ENCODE measurements at regions of chr15 and their contacts with region 1.

Region 1: GRCh38 chr15:68875377-68876116 is 54.8 kb upstream of the SPESP1 start:
- DNase-seq: peak; percentile 91 to 94
- H3K4me3 ChIP-seq: peak overlapping the region; percentile 26 to 41
- H3K27ac ChIP-seq: peak overlapping the region in 1 of 2 donors; percentile 22
- H3K4me1 ChIP-seq: no peaks in the 10 kb centered on the region
- H3K27me3 ChIP-seq: no peaks in the 10 kb centered on the region
- CTCF ChIP-seq: peak; percentile 87 to 94 (median 92)
- POLR2A ChIP-seq: no peak

Region 2: DNA sequence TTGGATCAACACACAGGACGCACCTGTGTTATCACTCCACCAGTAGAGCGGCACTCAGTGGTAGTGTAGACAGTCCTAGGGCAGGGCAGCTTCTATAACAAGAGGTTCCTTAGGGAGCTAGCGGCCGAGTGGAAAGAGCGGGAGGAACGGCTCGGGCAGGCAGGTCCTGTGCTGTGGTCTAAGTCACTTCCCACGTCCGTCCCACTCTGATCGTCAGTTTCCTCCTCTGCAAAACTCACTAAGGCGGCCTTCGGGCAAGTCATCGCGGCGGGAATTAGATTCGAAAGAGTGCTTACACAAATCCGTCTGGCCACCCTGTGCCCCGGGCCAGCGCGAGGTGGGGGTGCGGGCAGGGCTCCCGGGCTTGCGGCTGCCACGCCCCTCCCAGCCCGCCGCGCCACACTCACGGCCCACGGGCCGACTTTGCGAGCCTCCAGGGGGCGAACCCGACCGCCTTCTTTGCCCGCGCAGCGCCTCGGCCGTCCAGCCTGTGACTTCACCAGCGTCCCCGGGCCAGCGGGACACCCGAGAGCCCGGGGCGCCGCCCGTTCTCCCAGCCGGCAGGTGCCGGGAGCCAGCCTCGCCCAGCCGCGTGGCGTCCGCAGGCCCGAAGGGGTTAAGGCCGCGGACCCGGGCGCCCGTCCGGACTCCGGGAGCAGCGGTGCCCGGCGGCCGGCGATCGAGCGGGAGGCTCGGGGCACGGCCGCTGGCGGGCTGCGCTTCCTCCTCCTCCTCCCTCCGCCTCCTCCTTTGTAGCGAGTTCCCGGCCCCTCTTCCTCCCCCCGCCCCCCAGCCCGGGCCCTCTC is 297.2 kb before region 1 on chr15:
- intact Hi-C with region 1: loop called (anchors 10 kb)
- DNase-seq: peak; percentile 80 to 86
- H3K4me3 ChIP-seq: peak overlapping the region; percentile 32 to 60
- H3K27ac ChIP-seq: peak overlapping the region; percentile 75 to 90
- H3K4me1 ChIP-seq: no peaks in the 10 kb centered on the region
- H3K27me3 ChIP-seq: no peaks in the 10 kb centered on the region
- CTCF ChIP-seq: peak; percentile 59 to 89 (median 74)
- POLR2A ChIP-seq: peak in 1 of 2 donors; percentile 42

Region 3: DNA sequence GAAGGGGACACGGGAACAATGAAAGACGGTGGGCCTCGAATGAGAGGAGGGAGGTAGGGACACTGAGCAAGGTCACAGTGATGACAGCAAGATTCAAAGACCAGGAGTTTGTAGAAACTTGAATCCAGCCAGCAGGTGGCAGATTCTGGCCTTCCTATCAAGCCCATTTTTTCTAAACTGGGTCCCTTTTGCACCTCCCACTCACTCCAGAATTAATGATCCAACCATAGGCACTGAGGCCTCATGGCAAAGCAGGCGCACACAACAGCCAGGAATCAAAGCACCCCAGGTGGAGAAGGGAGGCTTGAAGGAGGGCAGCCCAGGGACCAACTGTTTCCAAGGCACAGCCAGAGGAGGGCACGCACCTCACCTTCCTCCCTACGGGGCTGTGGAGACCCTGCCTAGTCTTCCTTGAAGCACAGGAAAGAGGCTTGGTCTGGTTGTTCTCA is 145.1 kb before region 1 on chr15:
- intact Hi-C with region 1: loop called (anchors 10 kb)
- DNase-seq: peak; percentile 34 to 60
- H3K4me3 ChIP-seq: no peak overlapping the region
- H3K27ac ChIP-seq: peak overlapping the region; percentile 59 to 77
- H3K4me1 ChIP-seq: peaks cover 0 to 15% of the 10 kb centered on the region in 2 donors
- H3K27me3 ChIP-seq: no peaks in the 10 kb centered on the region
- CTCF ChIP-seq: peak; percentile 41 to 67 (median 58)
- POLR2A ChIP-seq: no peak